ENCODE measurements at regions of chr16 and their contacts with region 1.

Region 1: DNA sequence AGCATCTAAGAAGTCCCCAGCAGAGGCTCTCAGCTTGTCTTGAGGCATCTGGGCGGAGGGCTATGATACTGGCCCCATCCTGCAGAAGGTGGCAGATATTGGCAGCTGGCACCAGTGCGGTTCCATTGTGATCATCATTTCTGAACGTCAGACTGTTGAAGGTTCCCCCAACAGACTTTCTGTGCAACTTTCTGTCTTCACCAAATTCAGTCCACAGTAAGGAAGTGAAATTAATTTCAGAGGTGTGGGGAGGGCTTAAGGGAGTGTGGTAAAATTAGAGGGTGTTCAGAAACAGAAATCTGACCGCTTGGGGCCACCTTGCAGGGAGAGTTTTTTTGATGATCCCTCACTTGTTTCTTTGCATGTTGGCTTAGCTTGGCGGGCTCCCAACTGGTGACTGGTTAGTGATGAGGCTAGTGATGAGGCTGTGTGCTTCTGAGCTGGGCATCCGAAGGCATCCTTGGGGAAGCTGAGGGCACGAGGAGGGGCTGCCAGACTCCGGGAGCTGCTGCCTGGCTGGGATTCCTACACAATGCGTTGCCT is at the start of gene CIITA:
- DNase-seq: peak; percentile 97
- ATAC-seq: peak; percentile 56
- H3K4me3 ChIP-seq: peak within 1 kb of the TSS; percentile 78
- H3K27ac ChIP-seq: peak within 1 kb of the TSS; percentile 94
- H3K4me1 ChIP-seq: peaks cover 40% of the 10 kb centered on the region
- H3K27me3 ChIP-seq: no peaks in the 10 kb centered on the region
- CTCF ChIP-seq: no peak
- EP300 ChIP-seq: peak; percentile 28 to 85; a peak in 3 of 4 replicates
- POLR2A ChIP-seq: peak; percentile 86
- RAD21 ChIP-seq: peak; percentile 32; the same call in 1 of the 2 replicates
- polyA plus RNA-seq, gene CIITA: 11.5 to 12.5 TPM

Region 2: GRCh38 chr16:10737068-10737625 is 139.7 kb before region 1 on chr16:
- CTCF ChIA-PET with region 1: interaction called, 8 read pairs
- POLR2A ChIA-PET with region 1: interaction called, 25 read pairs
- RAD21 ChIA-PET with region 1: interaction called, 65 read pairs
- SMC1A ChIA-PET with region 1: interaction called, 66 read pairs
- in situ Hi-C with region 1: loop called (anchors 5 kb)
- intact Hi-C with region 1: loop called (anchors 2 kb)
- DNase-seq: peak; percentile 65
- ATAC-seq: peak; percentile 45
- H3K4me3 ChIP-seq: peak overlapping the region; percentile 13; the same call in 1 of the 2 replicates
- H3K27ac ChIP-seq: peak overlapping the region; percentile 82
- H3K4me1 ChIP-seq: peaks cover 41% of the 10 kb centered on the region
- H3K27me3 ChIP-seq: no peaks in the 10 kb centered on the region
- CTCF ChIP-seq: peak; percentile 87 to 94 (median 90); a peak in 5 of 6 replicates
- EP300 ChIP-seq: no peak
- POLR2A ChIP-seq: no peak
- RAD21 ChIP-seq: peak; percentile 97

Region 3: DNA sequence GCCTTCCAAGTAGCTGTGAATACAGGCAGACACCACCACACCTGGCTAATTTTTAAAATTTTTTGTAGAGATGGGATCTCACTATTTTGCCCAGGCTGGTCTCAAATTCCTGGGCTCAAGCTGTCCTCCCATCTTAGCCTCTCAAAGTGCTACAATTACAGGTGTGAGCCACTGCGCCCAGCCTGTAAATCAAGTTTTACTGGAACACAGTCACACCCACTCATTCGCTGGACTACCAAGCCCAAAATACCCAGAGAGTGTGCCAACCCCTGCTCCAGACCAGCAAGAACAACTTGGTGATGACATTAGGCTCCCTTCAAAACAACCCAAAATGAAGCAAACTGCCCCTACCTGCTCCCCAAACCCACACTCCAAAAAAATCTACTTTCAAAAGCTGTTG is 94.2 kb before region 1 on chr16:
- CTCF ChIA-PET with region 1: interaction called, 5 read pairs
- POLR2A ChIA-PET with region 1: interaction called, 4 read pairs
- RAD21 ChIA-PET with region 1: interaction called, 15 read pairs
- SMC1A ChIA-PET with region 1: interaction called, 5 read pairs
- in situ Hi-C with region 1: no loop called
- intact Hi-C with region 1: no loop called
- DNase-seq: no peak
- ATAC-seq: no peak
- H3K4me3 ChIP-seq: no peak overlapping the region
- H3K27ac ChIP-seq: no peak overlapping the region
- H3K4me1 ChIP-seq: peaks cover 14% of the 10 kb centered on the region
- H3K27me3 ChIP-seq: no peaks in the 10 kb centered on the region
- CTCF ChIP-seq: no peak
- EP300 ChIP-seq: no peak
- POLR2A ChIP-seq: no peak
- RAD21 ChIP-seq: no peak

Region 4: GRCh38 chr16:10835281-10835931 is 41.5 kb before region 1 on chr16:
- CTCF ChIA-PET with region 1: interaction called, 8 read pairs
- POLR2A ChIA-PET with region 1: interaction called, 25 read pairs
- RAD21 ChIA-PET with region 1: interaction called, 33 read pairs
- SMC1A ChIA-PET with region 1: interaction called, 75 read pairs
- in situ Hi-C with region 1: no loop called
- intact Hi-C with region 1: no loop called
- DNase-seq: peak; percentile 84
- ATAC-seq: peak; percentile 76
- H3K4me3 ChIP-seq: no peak overlapping the region
- H3K27ac ChIP-seq: peak overlapping the region; percentile 33
- H3K4me1 ChIP-seq: peaks cover 49% of the 10 kb centered on the region
- H3K27me3 ChIP-seq: no peaks in the 10 kb centered on the region
- CTCF ChIP-seq: no peak
- EP300 ChIP-seq: peak; percentile 86 to 89
- POLR2A ChIP-seq: no peak
- RAD21 ChIP-seq: no peak; the same call in 1 of the 2 replicates

Region 5: DNA sequence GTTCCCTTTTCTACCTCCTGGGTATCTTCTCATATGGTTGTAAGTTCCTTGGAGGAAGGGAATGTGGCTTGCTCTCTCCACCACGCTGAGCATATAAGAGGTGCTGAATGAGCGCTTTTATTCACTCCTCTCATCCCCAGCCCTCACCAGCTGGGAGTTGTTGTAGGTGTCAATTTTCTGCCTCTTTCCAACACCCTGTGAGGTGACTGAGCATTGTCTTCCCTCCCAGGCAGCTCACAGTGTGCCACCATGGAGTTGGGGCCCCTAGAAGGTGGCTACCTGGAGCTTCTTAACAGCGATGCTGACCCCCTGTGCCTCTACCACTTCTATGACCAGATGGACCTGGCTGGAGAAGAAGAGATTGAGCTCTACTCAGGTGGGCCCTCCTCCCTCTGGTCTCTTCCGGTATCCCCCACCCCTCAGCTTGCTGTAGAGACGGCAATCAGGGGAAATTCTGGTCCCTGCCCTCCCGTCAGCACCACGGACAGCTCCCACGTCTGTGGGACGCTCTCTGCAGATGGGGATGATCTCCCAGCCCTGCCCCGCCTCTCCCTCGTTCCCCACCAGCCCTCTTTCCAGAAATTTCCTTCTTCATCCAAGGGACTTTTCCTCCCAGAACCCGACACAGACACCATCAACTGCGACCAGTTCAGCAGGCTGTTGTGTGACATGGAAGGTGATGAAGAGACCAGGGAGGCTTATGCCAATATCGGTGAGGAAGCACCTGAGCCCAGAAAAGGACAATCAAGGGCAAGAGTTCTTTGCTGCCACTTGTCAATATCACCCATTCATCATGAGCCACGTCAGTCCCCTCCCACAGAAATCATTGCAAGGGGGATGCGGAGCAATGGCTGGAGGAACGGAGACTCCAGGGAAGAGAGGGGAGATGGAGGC is 18.4 kb after region 1 on chr16:
- CTCF ChIA-PET with region 1: interaction called, 73 read pairs
- POLR2A ChIA-PET with region 1: interaction called, 133 read pairs
- RAD21 ChIA-PET with region 1: interaction called, 142 read pairs
- SMC1A ChIA-PET with region 1: interaction called, 133 read pairs
- in situ Hi-C with region 1: no loop called
- intact Hi-C with region 1: loop called (anchors 2 kb)
- DNase-seq: no peak
- ATAC-seq: no peak
- H3K4me3 ChIP-seq: no peak overlapping the region
- H3K27ac ChIP-seq: no peak overlapping the region
- H3K4me1 ChIP-seq: peaks cover 68% of the 10 kb centered on the region
- H3K27me3 ChIP-seq: no peaks in the 10 kb centered on the region
- CTCF ChIP-seq: no peak
- EP300 ChIP-seq: no peak
- POLR2A ChIP-seq: no peak
- RAD21 ChIP-seq: no peak

Region 6: DNA sequence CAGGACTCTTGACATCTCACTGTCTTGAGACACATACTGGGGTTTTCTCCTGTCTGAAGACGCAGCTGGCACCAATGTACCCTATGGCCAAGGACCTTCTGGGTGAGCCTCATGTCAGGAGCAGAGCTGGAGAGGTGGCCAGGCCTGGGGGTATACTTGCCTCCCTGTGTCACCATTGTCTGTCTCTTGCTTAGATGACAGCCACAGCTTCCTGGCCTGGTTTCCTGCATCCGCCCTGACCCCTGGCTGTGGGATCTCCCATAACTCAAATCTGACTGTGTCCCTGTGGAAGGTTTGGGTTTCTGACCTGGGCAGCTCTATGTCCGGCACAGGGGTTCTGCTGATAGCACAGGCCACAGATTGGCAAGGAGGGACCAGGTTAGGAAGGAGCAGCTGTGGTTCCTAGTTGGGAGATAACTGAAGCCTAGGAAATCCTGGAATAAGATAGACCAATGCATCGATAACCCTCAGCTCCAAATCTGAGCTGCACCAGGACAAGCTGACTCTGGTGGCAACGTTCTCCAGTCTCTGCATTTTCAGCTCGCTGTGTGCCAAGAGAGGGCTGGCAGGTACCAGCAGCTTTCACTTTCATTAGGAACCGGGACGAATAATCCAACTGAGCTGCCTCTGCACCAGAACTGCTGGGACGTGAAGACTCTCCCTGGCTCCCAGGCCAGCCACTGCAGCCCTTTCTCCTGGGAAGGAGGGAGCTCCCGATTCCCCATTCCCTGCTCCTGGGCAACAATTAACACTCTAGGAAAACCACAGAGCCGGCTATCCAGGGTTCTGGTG is 60.4 kb after region 1 on chr16:
- CTCF ChIA-PET with region 1: interaction called, 14 read pairs
- POLR2A ChIA-PET with region 1: interaction called, 15 read pairs
- RAD21 ChIA-PET with region 1: interaction called, 14 read pairs
- SMC1A ChIA-PET with region 1: interaction called, 11 read pairs
- in situ Hi-C with region 1: no loop called
- intact Hi-C with region 1: no loop called
- DNase-seq: no peak
- ATAC-seq: peak; percentile 4
- H3K4me3 ChIP-seq: peak overlapping the region; percentile 82; the same call in 1 of the 2 replicates
- H3K27ac ChIP-seq: peak overlapping the region; percentile 23
- H3K4me1 ChIP-seq: peaks cover 42% of the 10 kb centered on the region
- H3K27me3 ChIP-seq: no peaks in the 10 kb centered on the region
- CTCF ChIP-seq: peak in 1 of 3 experiments; percentile 22; a peak in 1 of 6 replicates
- EP300 ChIP-seq: no peak
- POLR2A ChIP-seq: no peak; the same call in 1 of the 2 replicates
- RAD21 ChIP-seq: no peak

Region 7: GRCh38 chr16:12617401-12617819 is 1740.5 kb after region 1 on chr16:
- CTCF ChIA-PET with region 1: no interaction called
- POLR2A ChIA-PET with region 1: no interaction called
- RAD21 ChIA-PET with region 1: no interaction called
- SMC1A ChIA-PET with region 1: no interaction called
- in situ Hi-C with region 1: no loop called
- intact Hi-C with region 1: no loop called
- DNase-seq: no peak
- ATAC-seq: no peak
- H3K4me3 ChIP-seq: no peak overlapping the region
- H3K27ac ChIP-seq: no peak overlapping the region
- H3K4me1 ChIP-seq: peaks cover 17% of the 10 kb centered on the region
- H3K27me3 ChIP-seq: no peaks in the 10 kb centered on the region
- CTCF ChIP-seq: no peak
- EP300 ChIP-seq: 0 out of 4 replicates have a peak, but pooled peaks of 1 of the 2 experiments have one; percentile 38
- POLR2A ChIP-seq: no peak
- RAD21 ChIP-seq: 0 out of 2 replicates have a peak, but pooled peaks have one; percentile 28